Activated T-helper 1 cell treated with anti-CD3 and anti-CD28 coated beads, Interleukin-12 subunit alpha, Interleukin-12 subunit beta, Interleukin-2, Interleukin-4 antibody, amounts not matched to agents 30 ng/mL and 10 ng/mL and 1 ng/mL, durations not matched to agents 14 hours and 24 hours and 36 hours (primary cell): ENCODE measurements at regions of chr7 and their contacts with region 1.

Region 1: DNA sequence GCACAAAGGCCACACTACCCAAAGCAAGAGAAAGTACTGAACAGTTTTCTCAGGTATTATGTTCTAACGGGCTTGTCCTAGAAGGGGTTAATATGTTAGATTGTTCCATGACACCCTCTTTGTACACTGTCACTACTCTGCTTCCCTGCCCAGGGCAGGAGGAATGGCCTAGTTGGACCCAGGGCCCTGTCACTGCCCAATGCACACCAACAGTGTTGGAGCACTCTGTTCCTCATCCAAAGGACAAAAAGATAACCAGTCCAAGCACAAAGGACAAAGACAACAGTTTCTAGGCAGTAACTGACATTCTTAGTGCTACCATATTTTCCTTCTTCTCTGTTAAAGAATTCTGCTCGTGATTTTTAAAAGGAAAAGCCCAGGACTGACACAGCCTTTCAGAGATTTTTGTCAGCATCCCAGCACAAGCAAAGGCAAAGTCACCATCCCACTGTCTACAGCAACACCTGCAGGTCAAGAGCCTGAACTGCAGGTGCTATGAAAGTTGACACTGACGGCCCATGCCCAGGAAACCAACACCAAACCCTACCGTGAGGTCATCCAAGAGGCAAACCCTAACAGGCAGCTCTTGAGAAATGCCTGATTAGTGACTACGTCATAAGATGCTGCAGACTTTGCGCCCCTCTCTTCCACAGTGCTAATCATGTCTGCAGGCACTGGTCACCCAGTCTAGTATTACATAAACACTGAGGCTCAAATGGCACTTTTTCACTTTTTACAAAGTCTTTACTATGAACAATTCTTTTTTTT is 13.2 kb downstream of the NUDCD3 start:
- DNase-seq: peak; percentile 51
- H3K4me3 Mint-ChIP-seq: no peak overlapping the region
- H3K27ac Mint-ChIP-seq: no peak overlapping the region
- H3K4me1 Mint-ChIP-seq: peaks cover 15% of the 10 kb centered on the region
- H3K27me3 Mint-ChIP-seq: no peaks in the 10 kb centered on the region

Region 2: GRCh38 chr7:44240983-44241510 is 236.2 kb before region 1 on chr7:
- intact Hi-C with region 1: loop called (anchors 1 kb)
- DNase-seq: peak; percentile 46
- H3K4me3 Mint-ChIP-seq: no peak overlapping the region
- H3K27ac Mint-ChIP-seq: peak overlapping the region; percentile 4
- H3K4me1 Mint-ChIP-seq: no peaks in the 10 kb centered on the region
- H3K27me3 Mint-ChIP-seq: no peaks in the 10 kb centered on the region

Region 3: DNA sequence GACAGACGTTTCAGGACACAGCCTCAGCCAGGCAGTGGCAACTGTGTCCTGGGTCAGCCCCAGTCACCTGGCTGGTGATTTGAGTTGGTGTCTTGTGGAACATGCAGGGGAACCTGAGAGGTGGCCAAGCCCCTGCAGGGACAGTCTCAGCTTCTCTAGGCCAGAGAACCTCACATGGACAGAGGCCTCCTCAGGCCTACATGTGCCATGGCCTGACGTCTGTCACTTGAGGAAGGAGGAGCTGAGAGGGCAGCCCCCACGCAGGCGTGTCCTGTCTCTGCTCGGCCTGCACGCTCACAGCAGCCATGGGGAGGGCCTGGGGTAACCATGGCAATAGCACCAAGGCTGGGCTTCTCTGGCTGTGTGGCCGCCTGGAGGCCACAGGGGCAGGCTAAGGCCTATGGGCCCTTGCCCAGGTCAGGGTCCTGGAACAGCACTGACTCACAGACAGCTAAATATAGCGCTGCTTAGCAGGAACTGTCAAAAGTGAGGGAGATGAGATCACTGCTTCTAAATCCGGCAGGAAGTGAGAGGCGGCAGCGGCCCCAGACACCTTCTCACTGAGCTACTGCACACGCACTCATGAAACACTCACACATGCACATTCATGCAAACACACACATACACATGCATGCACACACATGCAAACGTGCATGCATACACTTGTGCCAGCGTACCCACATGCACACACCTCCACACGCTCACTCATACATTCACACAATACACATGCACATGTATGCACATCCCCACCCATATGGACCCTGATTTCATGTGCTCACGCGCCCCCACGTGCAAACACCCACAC is 219.4 kb before region 1 on chr7:
- intact Hi-C with region 1: loop called (anchors 5 kb)
- DNase-seq: peak; percentile 69
- H3K4me3 Mint-ChIP-seq: peak overlapping the region; percentile 56
- H3K27ac Mint-ChIP-seq: peak overlapping the region; percentile 78
- H3K4me1 Mint-ChIP-seq: peaks cover 34% of the 10 kb centered on the region
- H3K27me3 Mint-ChIP-seq: no peaks in the 10 kb centered on the region

Region 4: GRCh38 chr7:44348300-44348699 is 128.9 kb before region 1 on chr7:
- intact Hi-C with region 1: loop called (anchors 1 kb)
- DNase-seq: no peak
- H3K4me3 Mint-ChIP-seq: no peak overlapping the region
- H3K27ac Mint-ChIP-seq: no peak overlapping the region
- H3K4me1 Mint-ChIP-seq: no peaks in the 10 kb centered on the region
- H3K27me3 Mint-ChIP-seq: peaks cover 51% of the 10 kb centered on the region

Region 5: DNA sequence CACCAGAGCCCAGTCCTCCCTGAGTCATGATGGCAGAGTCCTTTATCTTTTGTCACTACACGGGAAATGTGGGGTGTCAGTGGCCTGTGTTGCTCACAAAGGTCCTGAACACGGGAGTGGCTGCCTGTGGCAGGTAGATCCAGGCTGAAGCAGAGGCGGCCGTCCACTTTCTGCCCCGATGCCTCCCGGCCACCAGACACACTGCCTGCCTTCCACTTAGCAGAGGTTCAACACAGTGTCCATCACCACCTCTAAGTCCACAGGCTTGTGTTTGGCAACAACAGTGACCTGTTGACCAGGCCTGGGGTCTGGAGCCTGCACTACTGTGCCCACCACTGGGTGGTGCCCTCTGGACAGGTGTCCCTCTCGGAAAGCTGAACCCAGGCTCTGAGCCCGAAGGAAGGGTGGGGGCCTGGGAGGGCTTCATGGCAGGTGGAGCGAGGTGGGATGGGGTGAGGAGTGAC is 102.0 kb before region 1 on chr7:
- intact Hi-C with region 1: loop called (anchors 5 kb)
- DNase-seq: no peak
- H3K4me3 Mint-ChIP-seq: no peak overlapping the region
- H3K27ac Mint-ChIP-seq: no peak overlapping the region
- H3K4me1 Mint-ChIP-seq: peaks cover under 1% of the 10 kb centered on the region
- H3K27me3 Mint-ChIP-seq: peaks cover 15% of the 10 kb centered on the region

Region 6: DNA sequence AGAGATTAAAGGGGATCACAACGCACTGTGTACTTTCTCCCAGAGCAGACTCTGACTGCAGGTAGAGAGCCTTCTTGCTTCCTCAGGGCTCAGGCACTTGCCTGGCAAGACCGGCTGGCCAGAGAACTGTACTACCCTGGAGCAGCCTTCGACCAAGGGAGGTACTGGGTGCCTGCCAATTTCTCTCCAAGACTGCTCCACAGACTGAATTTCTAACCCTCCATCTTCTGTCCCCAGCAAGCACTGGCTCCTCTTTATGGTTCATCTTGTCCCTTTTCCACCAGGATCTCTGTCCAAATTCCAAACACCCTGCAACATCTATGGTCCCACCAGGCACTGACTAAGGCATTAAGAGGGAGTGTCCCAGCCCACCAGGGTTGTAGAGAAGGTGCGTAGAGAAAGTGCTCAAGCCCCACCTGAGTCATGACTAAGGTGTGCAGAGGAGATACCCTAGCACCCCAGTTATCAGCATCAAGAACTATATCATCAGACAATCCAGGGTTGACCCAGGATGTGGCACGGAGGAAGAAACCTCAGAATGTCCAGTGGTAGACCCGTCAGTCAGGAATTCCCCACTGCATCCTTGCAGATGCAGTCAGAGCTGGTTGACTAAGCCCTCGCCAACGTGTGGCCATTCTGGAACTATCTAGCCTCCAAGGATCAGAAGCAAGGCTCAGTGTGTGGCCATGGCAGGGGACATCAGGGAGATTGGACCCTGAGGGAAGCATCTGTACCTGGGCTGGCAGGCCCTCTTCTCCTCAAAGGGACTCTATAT is 90.9 kb before region 1 on chr7:
- intact Hi-C with region 1: no loop called
- DNase-seq: no peak
- H3K4me3 Mint-ChIP-seq: no peak overlapping the region
- H3K27ac Mint-ChIP-seq: no peak overlapping the region
- H3K4me1 Mint-ChIP-seq: no peaks in the 10 kb centered on the region
- H3K27me3 Mint-ChIP-seq: no peaks in the 10 kb centered on the region

Region 7: GRCh38 chr7:44431091-44431608 is 46.1 kb before region 1 on chr7:
- intact Hi-C with region 1: loop called (anchors 1 kb)
- DNase-seq: no peak
- H3K4me3 Mint-ChIP-seq: no peak overlapping the region
- H3K27ac Mint-ChIP-seq: no peak overlapping the region
- H3K4me1 Mint-ChIP-seq: peaks cover 13% of the 10 kb centered on the region
- H3K27me3 Mint-ChIP-seq: no peaks in the 10 kb centered on the region

Region 8: DNA sequence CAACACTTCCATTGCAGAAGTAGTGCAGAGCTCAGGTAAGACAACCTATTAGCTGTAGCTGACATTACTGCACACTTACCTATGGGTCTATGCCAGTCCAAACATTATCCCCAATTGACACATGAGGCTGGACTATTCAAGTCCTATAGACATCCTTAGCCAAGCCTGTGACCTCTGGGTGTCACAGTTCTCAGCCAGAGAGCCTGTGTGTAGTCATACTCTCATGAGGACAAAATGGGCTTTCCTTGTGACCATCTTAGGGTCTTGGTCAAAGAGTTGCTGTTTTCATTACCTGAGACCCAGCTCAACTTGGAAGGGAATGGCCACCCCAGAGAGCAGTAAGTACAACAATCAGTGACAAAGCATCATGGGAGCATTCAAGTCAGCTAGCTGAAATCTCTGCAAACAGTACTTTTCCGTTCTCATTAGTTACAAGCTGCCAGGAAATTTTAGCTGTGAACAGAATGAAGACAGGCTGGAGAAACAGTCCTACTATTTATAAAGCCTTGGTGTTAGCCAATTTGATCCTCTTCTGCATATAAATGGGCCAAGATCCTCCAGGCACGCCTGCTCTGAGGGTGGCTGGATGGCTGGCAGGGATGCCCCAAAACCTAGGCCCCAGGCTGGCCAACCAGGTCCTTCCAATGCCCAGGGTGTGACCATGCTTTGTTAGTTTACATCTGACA is 31.1 kb before region 1 on chr7:
- intact Hi-C with region 1: no loop called
- DNase-seq: no peak
- H3K4me3 Mint-ChIP-seq: no peak overlapping the region
- H3K27ac Mint-ChIP-seq: no peak overlapping the region
- H3K4me1 Mint-ChIP-seq: peaks cover 24% of the 10 kb centered on the region
- H3K27me3 Mint-ChIP-seq: no peaks in the 10 kb centered on the region

Region 9: GRCh38 chr7:44490351-44491200 is 13.3 kb after region 1 on chr7 and contains the start of gene NUDCD3:
- intact Hi-C with region 1: loop called (anchors 1 kb)
- DNase-seq: peak; percentile 73
- H3K4me3 Mint-ChIP-seq: peak within 1 kb of the TSS; percentile 88
- H3K27ac Mint-ChIP-seq: peak within 1 kb of the TSS; percentile 93
- H3K4me1 Mint-ChIP-seq: peaks cover 44% of the 10 kb centered on the region
- H3K27me3 Mint-ChIP-seq: no peaks in the 10 kb centered on the region
- total RNA-seq, gene NUDCD3: 77.9 and 83.1 TPM in 2 replicates

Region 10: DNA sequence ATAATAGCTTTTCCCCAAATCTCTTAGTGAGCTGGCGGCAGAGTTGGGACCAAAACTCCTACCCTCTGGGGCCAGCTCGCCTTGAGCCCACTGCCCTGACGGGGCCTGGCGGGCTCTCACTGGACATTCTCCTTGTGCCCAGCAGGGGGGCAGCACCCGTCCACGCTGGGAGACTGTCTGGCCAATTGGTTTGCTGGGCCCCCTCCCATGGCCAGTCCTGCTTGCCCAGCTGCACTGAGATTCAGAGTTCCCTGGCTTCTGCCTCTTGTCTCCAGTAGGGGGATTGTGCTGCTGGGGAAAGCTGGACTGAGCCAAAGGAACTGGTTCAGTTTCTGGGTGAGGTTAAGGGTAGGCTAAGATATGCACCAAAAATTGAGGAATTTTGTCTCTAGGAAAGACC is 740.1 kb after region 1 on chr7:
- intact Hi-C with region 1: no loop called
- DNase-seq: no peak
- H3K4me3 Mint-ChIP-seq: no peak overlapping the region
- H3K27ac Mint-ChIP-seq: no peak overlapping the region
- H3K4me1 Mint-ChIP-seq: no peaks in the 10 kb centered on the region
- H3K27me3 Mint-ChIP-seq: peaks cover 40% of the 10 kb centered on the region